Head of caudate nucleus (tissue), 42 donors: ENCODE measurements at regions of chr1 and their contacts with region 1.

Region 1: GRCh38 chr1:8525558-8526275 is 207.8 kb downstream of the SLC45A1 start:
- DNase-seq: peak; percentile 62 to 96 (median 91)

Region 2: GRCh38 chr1:8463144-8463927 is 62.4 kb before region 1 on chr1:
- intact Hi-C with region 1: loop called (anchors 10 kb)
- DNase-seq: peak in 16 of 42 donors; percentile 17 to 76 (median 47)